ENCODE measurements at regions of chr19 and their contacts with region 1.

Region 1: GRCh38 chr19:40090241-40091204 is at the start of gene ZNF780A:
- DNase-seq: peak; percentile 71
- ATAC-seq: peak; percentile 84
- H3K4me3 Mint-ChIP-seq: peak within 1 kb of the TSS; percentile 100
- H3K27ac Mint-ChIP-seq: peak within 1 kb of the TSS; percentile 100
- H3K4me1 Mint-ChIP-seq: peaks cover 35% of the 10 kb centered on the region
- H3K27me3 Mint-ChIP-seq: peaks cover 12% of the 10 kb centered on the region
- CTCF ChIP-seq: no peak
- total RNA-seq, gene ZNF780A: 23.8 and 25.5 TPM in 2 replicates

Region 2: DNA sequence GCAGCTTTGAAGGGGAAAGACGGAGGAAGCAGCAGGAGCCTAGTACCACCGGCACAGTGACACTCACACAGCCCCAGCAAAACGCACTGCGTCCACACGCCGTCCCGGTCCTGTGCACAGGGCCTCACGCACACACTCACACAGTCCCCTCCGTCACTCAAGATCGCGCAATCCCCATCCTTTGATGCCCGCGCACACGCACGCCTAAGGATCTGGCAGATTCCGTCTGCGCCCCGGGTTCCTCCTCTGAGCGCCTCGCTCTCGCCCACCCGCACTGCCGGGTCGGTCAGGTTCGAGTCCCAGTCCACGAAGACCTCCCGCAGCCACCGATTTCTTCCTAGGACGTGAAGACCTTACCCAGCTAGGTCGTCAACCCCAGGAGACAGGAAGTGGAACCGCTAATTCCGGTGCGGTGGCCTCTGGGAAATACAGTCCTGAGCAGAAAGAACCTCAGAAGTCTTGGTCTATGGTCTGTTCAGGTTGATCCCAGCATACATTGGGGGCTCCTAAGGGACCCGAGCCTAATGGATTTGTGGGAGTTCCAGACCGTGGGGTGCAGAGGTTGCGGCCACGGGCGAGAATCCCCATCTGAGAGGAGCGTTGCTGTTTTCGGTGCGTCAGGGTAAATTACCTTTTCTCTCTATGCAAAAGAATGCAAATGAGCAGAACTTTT is 34.6 kb before region 1 on chr19 and contains the start of gene ZNF780B:
- CTCF ChIA-PET with region 1: no interaction called
- POLR2A ChIA-PET with region 1: interaction called, 19 read pairs
- intact Hi-C with region 1: loop called (anchors 1 kb)
- DNase-seq: peak; percentile 67
- ATAC-seq: peak; percentile 90
- H3K4me3 Mint-ChIP-seq: peak within 1 kb of the TSS; percentile 100
- H3K27ac Mint-ChIP-seq: peak within 1 kb of the TSS; percentile 98
- H3K4me1 Mint-ChIP-seq: peaks cover 48% of the 10 kb centered on the region
- H3K27me3 Mint-ChIP-seq: peaks cover 6% of the 10 kb centered on the region
- CTCF ChIP-seq: no peak
- total RNA-seq, gene ZNF780B: 36.4 and 51.1 TPM in 2 replicates